ENCODE measurements at regions of chr17 and their contacts with region 1.

Region 1: DNA sequence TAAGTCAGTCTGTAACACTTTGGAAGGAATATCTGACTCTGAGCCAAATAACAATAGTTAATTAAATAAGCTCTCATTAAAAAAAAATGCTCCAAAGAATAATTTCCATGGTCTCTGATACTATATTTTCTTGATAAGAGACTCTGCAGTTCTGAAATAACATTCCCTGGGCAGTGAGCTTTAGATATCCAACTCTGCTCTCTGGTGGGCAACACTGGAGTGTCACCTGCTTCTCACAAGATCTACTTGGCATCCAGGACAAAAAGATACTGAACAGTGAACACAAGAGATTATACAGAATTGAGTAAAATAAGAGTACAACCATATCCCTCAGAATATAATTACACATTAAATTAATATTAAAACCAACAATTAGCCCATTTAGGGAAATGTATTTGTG is 13.7 kb downstream of the BLMH start:
- DNase-seq: peak; percentile 85
- H3K4me3 ChIP-seq: no peak overlapping the region
- H3K27ac ChIP-seq: no peak overlapping the region
- H3K4me1 ChIP-seq: no peaks in the 10 kb centered on the region
- H3K27me3 ChIP-seq: no peaks in the 10 kb centered on the region
- CTCF ChIP-seq: peak; percentile 46 to 55
- POLR2A ChIP-seq: no peak

Region 2: GRCh38 chr17:30116661-30117551 is 161.1 kb before region 1 on chr17 and contains the start of gene NSRP1:
- CTCF ChIA-PET with region 1: interaction called, 10 read pairs
- POLR2A ChIA-PET with region 1: no interaction called
- dilution Hi-C with region 1: no loop called
- intact Hi-C with region 1: no loop called
- DNase-seq: peak; percentile 97
- H3K4me3 ChIP-seq: peak within 1 kb of the TSS; percentile 61 to 92 (median 81)
- H3K27ac ChIP-seq: peak within 1 kb of the TSS; percentile 96
- H3K4me1 ChIP-seq: peaks cover 14% of the 10 kb centered on the region
- H3K27me3 ChIP-seq: no peaks in the 10 kb centered on the region
- CTCF ChIP-seq: no peak
- POLR2A ChIP-seq: peak; percentile 94
- total RNA-seq, gene NSRP1: 28.4 and 29.1 TPM in 2 replicates

Region 3: DNA sequence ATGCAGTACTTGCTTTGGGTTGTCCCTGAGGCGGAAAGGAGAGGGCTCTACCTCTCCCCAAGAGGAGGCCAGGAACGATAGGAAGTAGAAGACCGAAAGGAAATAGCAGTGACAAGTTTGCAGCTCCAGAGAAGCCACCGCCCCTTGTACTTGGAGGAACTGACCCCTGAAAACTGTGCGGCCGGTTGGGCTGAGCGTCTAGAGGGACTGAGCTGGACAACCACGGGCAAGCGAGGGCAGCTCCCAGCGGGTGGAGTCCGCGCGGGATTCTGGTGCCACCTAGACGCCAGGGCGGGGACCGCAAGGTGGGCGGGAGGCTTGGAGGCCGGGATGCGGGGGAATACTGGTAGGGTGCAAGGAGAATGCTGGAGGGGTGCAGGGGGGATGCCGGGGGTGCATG is 41.3 kb before region 1 on chr17:
- CTCF ChIA-PET with region 1: interaction called, 23 read pairs
- POLR2A ChIA-PET with region 1: no interaction called
- dilution Hi-C with region 1: no loop called
- intact Hi-C with region 1: no loop called
- DNase-seq: peak; percentile 44
- H3K4me3 ChIP-seq: no peak overlapping the region
- H3K27ac ChIP-seq: no peak overlapping the region
- H3K4me1 ChIP-seq: peaks cover 8% of the 10 kb centered on the region
- H3K27me3 ChIP-seq: peaks cover 51 to 54% of the 10 kb centered on the region in 2 experiments
- CTCF ChIP-seq: peak; percentile 26 to 65
- POLR2A ChIP-seq: no peak

Region 4: DNA sequence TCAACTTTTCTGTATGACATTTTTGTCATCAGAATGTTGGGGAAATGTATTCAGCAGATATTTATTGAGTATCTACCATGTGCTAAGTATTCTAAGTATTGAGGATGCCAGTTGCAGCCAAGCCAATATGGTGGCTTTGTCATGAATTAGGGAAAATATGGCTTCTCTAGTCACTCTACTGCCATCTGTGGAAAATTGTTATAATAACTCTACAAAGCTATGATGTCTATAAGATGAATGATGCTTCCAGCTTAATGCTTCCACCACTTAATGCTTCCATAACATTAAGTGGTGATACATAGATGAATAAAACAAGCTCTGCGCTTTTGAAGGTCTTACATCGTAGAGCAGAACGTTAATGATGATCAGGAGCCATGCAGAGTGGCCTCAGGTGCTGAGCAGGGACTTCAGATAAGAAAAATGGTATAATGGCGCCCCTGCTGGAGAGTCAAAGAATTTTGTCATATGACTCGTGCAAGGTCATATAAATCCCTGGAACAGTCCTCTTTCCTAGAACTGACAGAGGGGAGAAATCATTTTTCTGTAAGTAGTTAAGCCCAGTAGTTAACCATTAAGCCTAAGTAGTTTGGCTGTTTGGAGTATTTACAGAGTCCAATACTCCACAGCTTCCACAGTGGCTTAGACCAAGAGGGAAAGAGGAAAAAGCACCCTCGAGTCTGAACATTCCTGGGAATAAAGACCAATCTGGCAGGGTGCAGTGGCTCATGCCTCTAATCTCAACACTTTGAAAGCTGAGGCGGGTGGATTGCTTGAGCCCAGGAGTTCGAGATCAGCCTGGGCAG is 58.5 kb after region 1 on chr17:
- CTCF ChIA-PET with region 1: interaction called, 13 read pairs
- POLR2A ChIA-PET with region 1: no interaction called
- dilution Hi-C with region 1: no loop called
- intact Hi-C with region 1: no loop called
- DNase-seq: peak; percentile 64
- H3K4me3 ChIP-seq: no peak overlapping the region
- H3K27ac ChIP-seq: no peak overlapping the region
- H3K4me1 ChIP-seq: peaks cover 18% of the 10 kb centered on the region
- H3K27me3 ChIP-seq: no peaks in the 10 kb centered on the region
- CTCF ChIP-seq: peak; percentile 42 to 56
- POLR2A ChIP-seq: no peak